ENCODE measurements at regions of chr3 and their contacts with region 1.

Region 1: DNA sequence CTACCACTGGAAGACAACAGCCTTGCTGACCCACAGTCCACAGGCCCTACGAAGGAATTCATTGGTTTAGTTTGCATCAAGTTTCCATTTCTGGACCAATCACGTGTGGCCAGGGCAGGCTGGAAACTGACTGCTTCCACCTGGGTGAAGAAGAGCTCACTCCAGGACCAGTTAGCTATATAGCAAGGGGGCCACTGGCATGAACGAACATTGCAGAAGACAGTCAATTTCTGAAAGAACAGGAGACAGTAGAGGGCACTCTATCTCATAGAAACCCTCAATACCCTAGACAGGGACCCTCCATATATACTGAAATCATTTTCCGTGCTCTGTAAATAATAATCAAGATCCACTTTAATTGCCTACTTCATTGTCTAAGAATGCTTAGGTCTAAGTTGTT is 215.6 kb downstream of the CADPS start:
- DNase-seq: no peak
- H3K4me3 ChIP-seq: no peak overlapping the region
- H3K27ac ChIP-seq: no peak overlapping the region
- H3K4me1 ChIP-seq: no peaks in the 10 kb centered on the region
- H3K27me3 ChIP-seq: peaks cover 0 to 1% (median 0%) of the 10 kb centered on the region in 4 experiments; a peak in 1 of 7 replicates
- CTCF ChIP-seq: peak in 2 of 3 experiments; percentile 22 to 40; a peak in 2 of 4 replicates
- EP300 ChIP-seq: no peak
- POLR2A ChIP-seq: no peak
- RAD21 ChIP-seq: peak; percentile 25 to 46

Region 2: DNA sequence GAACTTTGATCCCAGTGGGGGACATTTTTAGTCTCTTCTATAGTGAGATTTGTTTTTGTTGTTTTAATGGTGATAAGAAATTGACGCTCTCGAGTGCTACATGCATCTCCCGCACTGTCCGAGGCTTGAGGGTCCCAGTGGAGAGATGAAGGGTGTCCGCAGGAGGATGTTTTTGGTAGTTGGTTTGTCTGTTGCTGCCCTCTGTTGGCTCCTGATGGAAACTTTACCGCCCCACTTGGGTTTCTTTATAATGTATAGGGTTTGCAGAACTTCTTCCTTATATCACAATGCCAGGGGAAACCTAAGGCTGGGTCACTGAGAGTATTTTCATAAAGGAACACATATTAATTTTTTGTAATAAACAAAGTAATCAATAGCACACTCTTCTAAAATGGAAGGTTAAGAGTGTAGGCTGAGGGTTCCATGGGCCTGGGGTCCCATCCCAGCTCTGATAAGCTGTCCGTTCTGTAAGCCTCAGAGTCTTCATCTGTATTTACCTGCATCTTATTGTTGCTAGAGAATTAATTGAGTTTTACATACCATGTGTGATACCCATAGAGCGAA is 101.0 kb before region 1 on chr3:
- CTCF ChIA-PET with region 1: no interaction called
- POLR2A ChIA-PET with region 1: no interaction called
- DNase-seq: peak; percentile 36 to 72
- H3K4me3 ChIP-seq: no peak overlapping the region
- H3K27ac ChIP-seq: no peak overlapping the region
- H3K4me1 ChIP-seq: peaks cover 0 to 10% (median 5%) of the 10 kb centered on the region in 4 experiments; a peak in 2 of 7 replicates
- H3K27me3 ChIP-seq: no peaks in the 10 kb centered on the region
- CTCF ChIP-seq: peak; percentile 46 to 87 (median 73)
- EP300 ChIP-seq: no peak
- POLR2A ChIP-seq: no peak
- RAD21 ChIP-seq: peak; percentile 90 to 91

Region 3: DNA sequence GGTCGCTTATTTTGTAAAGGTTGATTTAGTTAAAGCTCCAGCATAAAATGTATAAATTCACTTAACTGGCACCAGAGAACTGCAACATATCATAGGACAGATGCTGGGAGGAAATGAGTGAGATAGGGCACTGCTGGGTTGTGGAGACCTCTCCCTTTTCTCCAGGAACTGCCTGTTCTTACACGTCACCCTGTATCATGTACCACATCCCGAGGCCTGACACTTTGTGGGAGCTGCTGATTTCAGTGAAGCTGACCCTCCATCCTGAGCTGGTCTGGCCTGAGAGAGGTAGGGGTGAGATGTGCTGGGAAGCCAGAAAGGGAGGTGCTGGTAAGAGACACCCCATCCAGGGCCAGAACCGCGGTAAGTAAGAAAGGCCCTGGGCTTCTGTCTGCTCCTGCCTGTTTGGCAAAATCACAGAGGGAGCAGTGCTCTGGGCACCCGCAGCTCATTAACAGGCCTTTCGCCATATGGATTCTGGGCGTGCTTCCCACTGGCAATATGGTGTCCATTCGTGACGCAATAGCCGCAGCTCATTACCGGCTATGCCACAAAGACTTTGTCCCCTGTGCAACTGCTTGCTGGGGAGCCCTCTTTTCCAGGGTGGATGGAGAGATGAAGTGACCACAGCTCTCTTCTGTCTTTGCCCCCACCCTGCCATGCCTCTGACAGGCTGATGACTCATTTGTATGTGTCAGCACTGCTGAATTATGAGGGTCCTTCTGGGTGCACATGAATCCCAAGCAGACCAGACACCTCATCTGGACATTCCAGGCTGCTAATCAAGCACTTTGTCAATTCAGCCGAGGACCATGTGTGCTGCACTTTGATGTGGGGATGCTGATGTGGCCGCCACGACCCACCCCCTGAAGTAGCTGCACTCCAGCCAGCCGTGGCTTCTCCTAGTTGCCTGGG is 72.2 kb before region 1 on chr3:
- CTCF ChIA-PET with region 1: no interaction called
- POLR2A ChIA-PET with region 1: no interaction called
- DNase-seq: no peak
- H3K4me3 ChIP-seq: no peak overlapping the region
- H3K27ac ChIP-seq: no peak overlapping the region
- H3K4me1 ChIP-seq: no peaks in the 10 kb centered on the region
- H3K27me3 ChIP-seq: no peaks in the 10 kb centered on the region
- CTCF ChIP-seq: no peak
- EP300 ChIP-seq: no peak
- POLR2A ChIP-seq: no peak
- RAD21 ChIP-seq: no peak

Region 4: DNA sequence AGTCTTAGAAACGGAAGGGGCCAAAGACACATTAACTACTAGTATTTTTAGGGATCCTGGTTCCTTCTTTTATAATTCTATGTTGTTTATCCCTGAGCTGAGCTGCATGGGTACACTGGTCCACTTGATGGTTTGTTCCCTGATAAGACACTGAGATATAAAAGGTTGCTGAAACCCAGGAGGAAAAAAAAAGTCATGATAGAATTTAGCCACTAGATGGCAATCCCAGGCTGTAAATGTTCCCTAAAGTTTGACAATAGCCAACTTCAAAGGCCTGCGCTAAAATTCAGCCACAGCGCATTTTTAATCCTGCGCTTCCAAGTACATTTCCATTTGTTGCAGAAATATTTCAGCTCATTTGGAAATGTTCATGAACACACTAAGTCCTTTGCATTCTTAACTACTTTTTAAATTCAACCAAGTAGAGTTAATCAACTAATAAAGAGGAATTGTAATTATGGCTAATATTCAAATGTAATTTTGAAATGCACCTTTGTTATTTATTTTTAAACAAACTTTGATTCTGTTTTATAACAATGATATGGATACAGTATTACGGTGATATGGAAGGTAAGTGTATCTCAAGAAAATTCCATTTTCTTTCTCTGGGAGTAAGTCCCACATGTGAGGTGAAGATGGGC is 36.9 kb before region 1 on chr3:
- CTCF ChIA-PET with region 1: interaction called, 14 read pairs
- POLR2A ChIA-PET with region 1: no interaction called
- DNase-seq: no peak
- H3K4me3 ChIP-seq: no peak overlapping the region
- H3K27ac ChIP-seq: no peak overlapping the region
- H3K4me1 ChIP-seq: no peaks in the 10 kb centered on the region
- H3K27me3 ChIP-seq: no peaks in the 10 kb centered on the region
- CTCF ChIP-seq: peak in 2 of 3 experiments; percentile 61 to 63; a peak in 3 of 4 replicates
- EP300 ChIP-seq: no peak
- POLR2A ChIP-seq: no peak
- RAD21 ChIP-seq: peak; percentile 83 to 88

Region 5: GRCh38 chr3:63022114-63022513 is 362.5 kb after region 1 on chr3:
- CTCF ChIA-PET with region 1: no interaction called
- POLR2A ChIA-PET with region 1: no interaction called
- DNase-seq: no peak
- H3K4me3 ChIP-seq: no peak overlapping the region
- H3K27ac ChIP-seq: no peak overlapping the region
- H3K4me1 ChIP-seq: no peaks in the 10 kb centered on the region
- H3K27me3 ChIP-seq: no peaks in the 10 kb centered on the region
- CTCF ChIP-seq: no peak
- EP300 ChIP-seq: no peak
- POLR2A ChIP-seq: no peak
- RAD21 ChIP-seq: no peak